Naive thymus-derived CD8-positive, alpha-beta T cell (primary cell): ENCODE measurements at regions of chr1 and their contacts with region 1.

Region 1: DNA sequence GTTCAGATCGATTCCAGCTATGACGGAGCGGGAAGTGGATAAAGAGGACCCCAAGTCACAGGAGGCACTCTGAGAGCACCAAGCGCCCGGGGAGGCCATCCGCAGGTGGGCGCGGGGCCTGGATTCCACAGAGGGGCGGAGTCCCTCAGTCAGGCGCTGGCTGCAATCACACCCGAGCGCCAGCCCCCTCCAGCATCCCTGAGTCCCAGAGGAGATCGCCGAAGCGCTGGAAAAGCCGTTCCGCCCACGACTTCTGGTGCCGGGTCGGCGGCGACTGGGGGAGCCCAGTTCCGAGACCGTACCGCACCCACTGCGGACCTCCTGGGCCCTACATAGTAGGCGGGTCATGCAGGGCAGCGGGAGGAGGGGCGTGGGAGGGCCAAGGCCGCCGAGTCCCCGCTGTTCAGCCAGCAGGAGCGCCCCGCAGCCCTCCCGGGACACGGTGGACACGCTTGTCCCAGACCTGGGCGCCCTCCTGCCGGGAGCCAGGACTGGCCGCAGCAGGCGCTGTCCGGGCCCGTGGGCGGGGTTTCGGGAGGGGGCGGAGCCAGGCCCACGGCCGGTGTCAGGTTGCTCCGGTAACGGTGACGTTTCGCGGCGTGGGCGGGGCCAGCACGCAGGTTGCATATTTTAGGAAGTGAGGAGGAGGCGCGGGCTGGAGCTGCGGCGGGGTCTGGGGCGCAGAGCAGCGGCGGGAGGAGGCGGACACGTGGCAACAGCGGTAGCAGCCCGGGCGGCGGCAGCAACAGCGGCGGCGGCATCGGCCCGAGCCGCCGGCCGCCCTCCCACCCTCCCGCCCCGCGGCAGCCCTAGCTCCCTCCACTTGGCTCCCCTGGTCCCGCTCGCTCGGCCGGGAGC is at the start of gene ATP1A1:
- DNase-seq: peak; percentile 94 to 99 (median 97)
- ATAC-seq: peak; percentile 61 to 72
- H3K4me3 Mint-ChIP-seq: peak within 1 kb of the TSS; percentile 93 to 99 (median 97)
- H3K27ac Mint-ChIP-seq: peak within 1 kb of the TSS; percentile 92 to 99 (median 98)
- H3K4me1 Mint-ChIP-seq: peaks cover 28 to 55% (median 49%) of the 10 kb centered on the region in 4 donors
- H3K27me3 Mint-ChIP-seq: no peaks in the 10 kb centered on the region
- polyA plus RNA-seq, gene ATP1A1: 59.1 to 65.0 (median 60.6) TPM

Region 2: GRCh38 chr1:116290090-116290666 is 82.6 kb before region 1 on chr1:
- POLR2A ChIA-PET with region 1: no interaction called
- DNase-seq: no peak
- ATAC-seq: no peak
- H3K4me3 Mint-ChIP-seq: no peak overlapping the region
- H3K27ac Mint-ChIP-seq: no peak overlapping the region
- H3K4me1 Mint-ChIP-seq: peaks cover 4 to 26% (median 17%) of the 10 kb centered on the region in 4 donors
- H3K27me3 Mint-ChIP-seq: no peaks in the 10 kb centered on the region

Region 3: GRCh38 chr1:116325922-116326321 is 46.9 kb before region 1 on chr1:
- POLR2A ChIA-PET with region 1: interaction called, 54 read pairs
- DNase-seq: peak; percentile 18 to 79 (median 46)
- ATAC-seq: peak; percentile 91 to 93
- H3K4me3 Mint-ChIP-seq: peak overlapping the region; percentile 60 to 85 (median 70)
- H3K27ac Mint-ChIP-seq: peak overlapping the region; percentile 90 to 98 (median 94)
- H3K4me1 Mint-ChIP-seq: peaks cover 46 to 92% (median 88%) of the 10 kb centered on the region in 4 donors
- H3K27me3 Mint-ChIP-seq: no peaks in the 10 kb centered on the region

Region 4: GRCh38 chr1:116345843-116346242 is 27.0 kb before region 1 on chr1:
- POLR2A ChIA-PET with region 1: interaction called, 15 read pairs
- DNase-seq: peak; percentile 32 to 94 (median 78)
- ATAC-seq: peak; percentile 90 to 93
- H3K4me3 Mint-ChIP-seq: peak overlapping the region in 9 of 10 donors; percentile 33 to 77 (median 49)
- H3K27ac Mint-ChIP-seq: peak overlapping the region; percentile 88 to 99 (median 96)
- H3K4me1 Mint-ChIP-seq: peaks cover 25 to 78% (median 58%) of the 10 kb centered on the region in 4 donors
- H3K27me3 Mint-ChIP-seq: no peaks in the 10 kb centered on the region

Region 5: GRCh38 chr1:116390195-116390594 is 17.4 kb after region 1 on chr1:
- POLR2A ChIA-PET with region 1: interaction called, 14 read pairs
- DNase-seq: peak in 1 of 10 donors; percentile 19
- ATAC-seq: peak; percentile 43 to 49
- H3K4me3 Mint-ChIP-seq: no peak overlapping the region
- H3K27ac Mint-ChIP-seq: peak overlapping the region in 8 of 10 donors; percentile 20 to 80 (median 62)
- H3K4me1 Mint-ChIP-seq: peaks cover 18 to 63% (median 45%) of the 10 kb centered on the region in 4 donors
- H3K27me3 Mint-ChIP-seq: no peaks in the 10 kb centered on the region

Region 6: GRCh38 chr1:116476321-116476720 is 103.5 kb after region 1 on chr1:
- POLR2A ChIA-PET with region 1: no interaction called
- DNase-seq: no peak
- ATAC-seq: no peak
- H3K4me3 Mint-ChIP-seq: no peak overlapping the region
- H3K27ac Mint-ChIP-seq: no peak overlapping the region
- H3K4me1 Mint-ChIP-seq: peaks cover 0 to 1% (median 0%) of the 10 kb centered on the region in 4 donors
- H3K27me3 Mint-ChIP-seq: peaks cover 0 to 5% (median 0%) of the 10 kb centered on the region in 5 donors